ENCODE measurements at regions of chr3 and their contacts with region 1.

Region 1: DNA sequence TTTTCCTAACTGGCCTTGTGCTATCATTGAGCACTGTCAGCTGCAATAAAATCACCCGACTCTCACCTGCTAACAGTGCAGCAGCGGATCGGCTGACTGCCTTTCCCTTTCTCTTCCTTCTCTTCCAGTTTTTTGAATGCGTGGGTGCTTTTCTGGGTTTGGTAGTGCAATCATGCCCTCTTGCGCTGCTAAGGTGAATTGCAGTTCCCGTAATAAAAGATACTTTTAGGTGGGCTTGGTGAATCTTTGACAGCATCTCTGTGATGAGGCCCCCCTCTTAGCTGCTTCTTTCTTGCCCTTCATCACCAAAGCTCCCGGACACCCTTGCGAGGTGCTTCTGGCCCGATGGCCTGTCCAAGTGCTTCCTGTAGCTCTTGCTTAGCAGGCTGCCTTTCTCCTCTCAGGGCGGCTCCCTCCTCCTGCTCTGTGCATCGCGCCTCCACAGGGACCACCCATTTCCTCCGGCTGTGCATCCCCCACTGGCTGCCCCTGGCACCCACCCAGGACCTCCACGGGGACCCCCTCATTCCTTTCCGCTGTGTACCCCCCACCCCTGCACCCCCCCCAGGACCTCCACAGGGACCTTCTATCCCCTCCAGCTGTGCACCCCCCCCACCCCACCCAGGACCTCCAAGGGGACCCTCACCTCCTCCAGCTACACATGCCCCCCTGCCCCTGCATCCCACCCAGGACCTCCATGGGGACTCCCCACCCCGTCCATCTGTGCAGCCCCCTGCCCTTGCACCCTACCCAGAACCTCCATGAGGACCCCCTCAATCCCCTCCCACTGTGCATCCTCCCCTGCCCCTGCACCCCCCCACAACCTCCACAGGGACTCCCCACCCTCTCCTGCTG is 50.8 kb upstream of the RPL32 start:
- DNase-seq: peak; percentile 57
- H3K4me3 ChIP-seq: no peak overlapping the region
- H3K27ac ChIP-seq: no peak overlapping the region
- H3K4me1 ChIP-seq: no peaks in the 10 kb centered on the region
- H3K27me3 ChIP-seq: peaks cover 7 to 9% of the 10 kb centered on the region in 2 experiments
- CTCF ChIP-seq: peak; percentile 69 to 76
- POLR2A ChIP-seq: no peak

Region 2: DNA sequence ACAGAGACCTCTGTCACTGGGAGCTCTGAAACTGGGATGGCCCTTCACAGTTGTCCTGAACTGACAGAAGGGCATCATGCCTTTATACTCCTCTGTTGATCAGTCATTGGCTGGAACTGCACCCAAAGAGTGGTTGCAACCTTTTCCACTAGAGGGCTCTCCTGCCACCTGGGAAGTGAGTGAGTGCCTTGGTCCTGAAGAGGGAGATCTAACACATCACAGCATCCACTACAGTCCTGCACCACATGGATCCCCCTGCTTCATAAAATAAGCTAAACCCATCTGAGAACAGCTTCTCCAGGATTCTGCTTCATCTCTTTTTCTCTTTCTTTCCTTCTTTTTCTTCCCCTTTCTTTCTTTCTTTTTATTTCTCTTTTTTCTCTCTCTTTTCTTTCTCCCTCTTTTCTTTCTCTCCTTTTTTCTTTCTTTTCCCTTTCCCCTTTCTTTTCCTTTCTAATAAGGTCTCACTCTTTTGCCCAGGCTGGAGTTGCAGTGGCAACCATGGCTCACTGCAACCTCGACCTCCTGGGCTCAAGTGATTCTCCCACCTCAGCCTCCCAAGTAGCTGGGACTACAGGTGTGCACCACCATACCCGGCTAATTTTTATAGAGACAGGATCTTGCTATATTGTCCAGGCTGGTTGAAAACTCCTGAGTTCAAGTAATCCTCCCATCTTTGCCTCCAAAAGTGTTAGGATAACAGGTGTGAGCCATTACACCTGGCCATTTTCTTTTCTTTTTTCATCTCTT is 185.5 kb before region 1 on chr3:
- CTCF ChIA-PET with region 1: interaction called, 3 read pairs
- POLR2A ChIA-PET with region 1: no interaction called
- dilution Hi-C with region 1: no loop called
- intact Hi-C with region 1: loop called (anchors 1 kb)
- DNase-seq: peak; percentile 74
- H3K4me3 ChIP-seq: no peak overlapping the region
- H3K27ac ChIP-seq: no peak overlapping the region
- H3K4me1 ChIP-seq: no peaks in the 10 kb centered on the region
- H3K27me3 ChIP-seq: no peaks in the 10 kb centered on the region
- CTCF ChIP-seq: peak; percentile 64 to 78
- POLR2A ChIP-seq: no peak

Region 3: GRCh38 chr3:12782172-12782815 is 109.9 kb before region 1 on chr3:
- CTCF ChIA-PET with region 1: interaction called, 23 read pairs
- POLR2A ChIA-PET with region 1: no interaction called
- dilution Hi-C with region 1: no loop called
- intact Hi-C with region 1: loop called (anchors 1 kb)
- DNase-seq: no peak
- H3K4me3 ChIP-seq: no peak overlapping the region
- H3K27ac ChIP-seq: no peak overlapping the region
- H3K4me1 ChIP-seq: no peaks in the 10 kb centered on the region
- H3K27me3 ChIP-seq: peaks cover 3 to 8% of the 10 kb centered on the region in 2 experiments
- CTCF ChIP-seq: no peak
- POLR2A ChIP-seq: no peak

Region 4: DNA sequence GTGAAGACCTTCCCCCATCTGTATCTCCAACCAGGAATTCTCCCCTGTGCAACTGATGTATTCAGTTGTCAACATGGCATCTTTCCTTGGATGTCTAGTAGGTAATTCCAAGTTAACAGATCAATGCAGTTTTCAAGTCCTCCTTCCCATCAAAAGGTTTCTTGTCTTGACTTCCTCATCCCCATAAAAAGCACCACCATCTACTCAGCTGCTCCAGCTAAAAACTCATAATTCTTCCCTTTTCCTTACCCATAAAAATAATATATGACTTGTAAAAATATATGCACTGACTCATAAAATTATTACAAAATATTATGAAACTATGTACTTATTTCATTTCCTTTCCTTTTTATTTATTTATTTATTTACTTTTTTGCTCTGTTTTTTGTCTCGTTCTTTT is 100.8 kb before region 1 on chr3:
- CTCF ChIA-PET with region 1: interaction called, 23 read pairs
- POLR2A ChIA-PET with region 1: no interaction called
- dilution Hi-C with region 1: no loop called
- intact Hi-C with region 1: loop called (anchors 1 kb)
- DNase-seq: no peak
- H3K4me3 ChIP-seq: no peak overlapping the region
- H3K27ac ChIP-seq: no peak overlapping the region
- H3K4me1 ChIP-seq: peaks cover 5% of the 10 kb centered on the region
- H3K27me3 ChIP-seq: no peaks in the 10 kb centered on the region
- CTCF ChIP-seq: no peak
- POLR2A ChIP-seq: no peak

Region 5: GRCh38 chr3:12841149-12841970 is 50.9 kb before region 1 on chr3 and contains the start of gene RPL32:
- CTCF ChIA-PET with region 1: interaction called, 17 read pairs
- POLR2A ChIA-PET with region 1: no interaction called
- dilution Hi-C with region 1: no loop called
- intact Hi-C with region 1: loop called (anchors 2 kb)
- DNase-seq: peak; percentile 97
- H3K4me3 ChIP-seq: peak within 1 kb of the TSS; percentile 88 to 98 (median 91)
- H3K27ac ChIP-seq: peak within 1 kb of the TSS; percentile 95
- H3K4me1 ChIP-seq: peaks cover 26% of the 10 kb centered on the region
- H3K27me3 ChIP-seq: no peaks in the 10 kb centered on the region
- CTCF ChIP-seq: peak; percentile 74 to 87
- POLR2A ChIP-seq: peak; percentile 98
- total RNA-seq, gene RPL32: 1,569 and 1,588 TPM in 2 replicates

Region 6: DNA sequence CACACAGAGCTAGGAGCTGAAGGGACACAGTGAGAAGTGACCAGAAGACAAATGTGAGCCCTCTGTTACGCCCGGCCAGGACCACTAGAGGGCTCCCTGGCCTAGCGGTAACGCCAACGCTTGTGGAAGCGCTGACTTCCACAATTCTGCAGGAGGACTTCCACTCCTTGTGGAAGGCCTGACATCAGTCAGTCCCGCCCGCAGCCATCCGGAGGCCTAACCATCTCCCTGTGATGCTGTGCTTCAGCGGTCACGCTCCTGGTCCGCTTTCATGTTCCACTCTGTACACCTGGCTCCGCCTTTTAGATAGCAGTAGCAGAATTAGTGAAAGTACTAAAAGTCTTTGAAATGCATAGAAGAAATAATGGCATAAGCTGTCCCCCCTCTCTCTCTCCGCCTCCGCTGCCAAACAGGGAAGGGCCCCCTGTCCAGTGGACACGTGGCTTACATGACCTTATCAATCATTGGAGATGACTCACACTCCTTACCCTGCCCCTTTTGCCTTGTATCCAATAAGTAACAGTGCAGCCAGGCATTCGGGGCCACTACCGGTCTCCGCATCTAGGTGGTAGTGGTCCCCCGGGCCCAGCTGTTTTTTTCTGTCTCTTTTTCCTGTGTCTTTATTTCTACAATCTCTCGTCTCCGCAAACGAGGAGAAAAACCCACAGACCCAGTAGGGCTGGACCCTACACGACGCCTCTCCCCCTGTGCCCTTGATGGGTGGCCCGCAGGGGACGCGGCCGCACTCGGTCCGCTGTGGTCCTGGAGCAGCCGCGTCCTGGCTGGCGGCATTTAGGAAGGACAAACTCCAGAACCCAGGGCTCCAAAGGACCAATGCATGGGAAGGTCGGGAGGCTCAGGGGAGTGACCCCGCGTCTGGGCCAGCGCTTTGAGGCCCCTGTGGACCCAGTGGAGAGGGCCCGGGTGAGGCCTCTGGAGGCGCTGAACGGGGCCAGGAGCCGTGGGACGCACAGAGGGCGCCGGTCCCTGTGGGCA is 23.9 kb before region 1 on chr3:
- CTCF ChIA-PET with region 1: interaction called, 80 read pairs
- POLR2A ChIA-PET with region 1: no interaction called
- dilution Hi-C with region 1: no loop called
- intact Hi-C with region 1: loop called (anchors 1 kb)
- DNase-seq: peak; percentile 83
- H3K4me3 ChIP-seq: peak overlapping the region in 1 of 3 experiments; percentile 4
- H3K27ac ChIP-seq: no peak overlapping the region
- H3K4me1 ChIP-seq: no peaks in the 10 kb centered on the region
- H3K27me3 ChIP-seq: no peaks in the 10 kb centered on the region
- CTCF ChIP-seq: peak; percentile 72 to 90
- POLR2A ChIP-seq: no peak

Region 7: GRCh38 chr3:12875857-12876836 is 16.1 kb before region 1 on chr3:
- CTCF ChIA-PET with region 1: interaction called, 80 read pairs
- POLR2A ChIA-PET with region 1: no interaction called
- dilution Hi-C with region 1: no loop called
- intact Hi-C with region 1: loop called (anchors 2 kb)
- DNase-seq: peak; percentile 20
- H3K4me3 ChIP-seq: peak overlapping the region in 1 of 3 experiments; percentile 20
- H3K27ac ChIP-seq: no peak overlapping the region
- H3K4me1 ChIP-seq: no peaks in the 10 kb centered on the region
- H3K27me3 ChIP-seq: peaks cover 0 to 1% of the 10 kb centered on the region in 2 experiments
- CTCF ChIP-seq: peak in 1 of 2 donors; percentile 48
- POLR2A ChIP-seq: no peak

Measured in endothelial cell of umbilical vein (primary cell).